Kidney (tissue), 22 donors: ENCODE measurements at regions of chr12 and their contacts with region 1.

Region 1: DNA sequence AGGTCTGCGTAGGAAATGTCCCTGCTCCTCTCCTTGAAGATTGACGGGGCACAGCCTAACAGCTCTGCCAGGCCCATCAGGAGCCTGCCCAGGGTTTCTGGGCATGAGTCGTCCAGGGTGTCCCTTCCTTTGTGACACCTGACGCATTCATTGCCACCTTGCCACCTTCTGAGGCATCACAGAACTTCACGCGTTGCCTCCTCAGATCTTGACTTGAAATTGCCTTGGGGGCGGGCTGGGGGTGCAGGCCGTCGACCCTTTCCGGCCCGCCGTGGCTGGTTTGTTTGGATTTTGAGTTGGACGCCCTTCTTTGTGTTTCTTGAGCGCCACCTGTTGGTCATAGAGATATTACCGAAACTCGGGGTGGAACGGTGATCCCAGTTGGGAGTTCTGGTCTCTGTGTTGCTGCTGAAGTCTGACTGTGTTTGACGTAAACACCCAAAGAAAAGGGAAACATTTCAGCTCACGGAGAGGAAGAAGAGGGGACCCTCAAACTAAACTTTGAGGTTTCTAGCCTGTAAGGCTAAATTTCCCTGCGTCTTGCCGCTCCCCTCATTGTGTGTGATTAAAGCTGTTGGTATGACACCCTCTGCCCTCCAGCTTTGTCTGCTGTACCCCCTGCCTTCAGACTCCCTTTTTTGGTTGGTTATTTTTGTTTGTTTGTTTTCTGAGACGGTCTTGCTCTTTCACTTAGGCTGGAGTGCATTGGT is 44.6 kb downstream of the MLXIP start:
- DNase-seq: peak; percentile 75 to 91 (median 84)
- H3K4me3 ChIP-seq: no peak overlapping the region
- H3K27ac ChIP-seq: no peak overlapping the region
- H3K4me1 ChIP-seq: peaks cover 0 to 27% (median 27%) of the 10 kb centered on the region in 3 donors
- H3K27me3 ChIP-seq: no peaks in the 10 kb centered on the region
- CTCF ChIP-seq: peak; percentile 76

Region 2: DNA sequence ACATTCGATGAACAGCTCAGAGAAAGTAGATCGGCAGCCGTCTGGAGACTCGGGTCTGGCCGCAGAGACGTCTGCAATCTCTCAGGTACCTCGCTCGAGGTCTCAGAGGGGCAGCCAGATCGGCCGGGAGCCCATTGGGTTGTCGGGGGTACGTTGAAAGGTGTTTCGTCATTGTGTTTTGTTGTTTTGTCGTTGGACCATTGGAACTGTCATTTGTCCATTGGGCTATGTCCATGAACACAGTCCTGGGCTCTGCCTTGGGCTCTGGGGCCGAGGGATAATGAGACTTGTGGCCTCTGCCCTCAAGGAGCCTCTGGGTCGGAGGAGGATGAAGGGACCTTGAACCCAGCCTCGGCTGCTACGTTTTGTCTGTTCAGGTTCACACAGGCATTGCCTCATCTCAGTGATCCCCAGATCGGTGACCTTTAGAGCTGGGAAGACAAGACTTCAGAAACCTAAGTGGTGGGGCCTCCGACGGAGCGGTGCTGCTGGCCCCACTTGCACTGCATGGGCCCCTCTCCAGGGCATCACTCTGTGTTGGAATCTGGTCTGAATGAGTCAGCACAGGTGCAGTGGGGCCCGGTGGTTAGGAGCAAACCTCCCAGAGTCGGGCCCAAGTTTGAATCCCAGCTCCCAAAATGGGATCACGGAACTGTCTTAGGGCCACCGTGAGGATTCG is 68.2 kb before region 1 on chr12:
- intact Hi-C with region 1: loop called (anchors 5 kb)
- DNase-seq: no peak
- H3K4me3 ChIP-seq: no peak overlapping the region
- H3K27ac ChIP-seq: peak overlapping the region in 1 of 2 donors; percentile 34
- H3K4me1 ChIP-seq: peaks cover 0 to 21% (median 17%) of the 10 kb centered on the region in 3 donors
- H3K27me3 ChIP-seq: no peaks in the 10 kb centered on the region
- CTCF ChIP-seq: no peak

Region 3: GRCh38 chr12:122276242-122276641 is 153.0 kb after region 1 on chr12:
- intact Hi-C with region 1: no loop called
- DNase-seq: no peak
- H3K4me3 ChIP-seq: no peak overlapping the region
- H3K27ac ChIP-seq: no peak overlapping the region
- H3K4me1 ChIP-seq: no peaks in the 10 kb centered on the region
- H3K27me3 ChIP-seq: no peaks in the 10 kb centered on the region
- CTCF ChIP-seq: no peak